KBM-7 (cell line): ENCODE measurements at regions of chr22 and their contacts with region 1.

Region 1: GRCh38 chr22:45863981-45864751 is 112.8 kb downstream of the WNT7B start:
- DNase-seq: peak; percentile 76

Region 2: GRCh38 chr22:45318168-45318557 is 546.0 kb before region 1 on chr22:
- in situ Hi-C with region 1: no loop called
- DNase-seq: peak; percentile 33

Region 3: DNA sequence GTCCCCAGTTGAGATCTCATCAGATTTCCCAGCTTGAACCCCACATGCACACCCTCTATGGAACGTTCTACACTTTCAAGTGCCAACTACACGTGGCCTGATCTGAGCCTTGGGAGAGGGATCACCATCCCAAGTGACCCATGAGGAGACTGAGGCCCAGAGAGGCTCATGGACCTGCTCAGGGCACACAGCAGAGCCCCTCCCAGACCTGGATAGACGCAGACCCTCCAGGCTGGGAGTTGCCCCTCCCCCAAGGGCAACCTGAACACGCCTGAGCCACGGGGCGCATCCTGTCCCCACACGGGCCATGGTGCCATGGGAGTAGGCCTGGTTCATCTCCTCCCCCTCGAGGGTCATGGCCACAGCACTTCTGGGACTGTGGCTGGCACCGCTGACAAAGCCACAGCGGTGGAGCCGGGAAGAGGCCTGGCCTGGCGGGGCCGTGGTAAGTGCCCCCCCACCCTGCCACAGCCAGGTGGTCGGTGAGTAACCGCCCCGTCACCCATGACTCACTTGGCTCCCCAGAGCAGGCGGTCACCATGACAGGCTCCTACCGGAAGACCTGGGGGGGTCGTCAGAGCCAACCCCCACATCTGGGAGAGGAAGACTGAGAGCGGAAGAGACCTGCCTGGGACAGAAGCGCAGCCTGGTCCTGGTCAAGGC is 104.7 kb after region 1 on chr22:
- in situ Hi-C with region 1: loop called (anchors 25 kb)
- DNase-seq: no peak